ENCODE measurements at regions of chr11 and their contacts with region 1.

Region 1: DNA sequence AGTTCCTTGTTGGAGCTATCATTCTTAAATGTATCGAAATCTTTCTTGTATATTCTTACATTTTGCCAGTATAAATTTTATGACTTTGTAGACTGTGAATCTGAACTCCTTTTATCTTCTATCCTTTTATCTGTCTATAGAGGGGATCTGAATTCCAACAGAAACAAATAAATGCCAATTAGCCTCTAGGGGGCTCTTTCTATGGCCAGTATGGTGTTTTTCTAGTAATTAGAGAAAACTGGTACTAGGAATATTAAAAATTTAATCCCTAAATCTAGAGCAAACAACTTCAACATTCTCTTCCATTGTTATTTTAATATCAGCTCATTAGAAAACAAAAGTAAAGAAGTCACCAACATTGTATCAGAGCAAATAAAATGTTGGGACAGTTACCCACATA is 21.5 kb upstream of the CAT start:
- DNase-seq: no peak
- ATAC-seq: no peak
- H3K4me3 ChIP-seq: no peak overlapping the region
- H3K27ac ChIP-seq: no peak overlapping the region
- H3K4me1 ChIP-seq: peaks cover 36% of the 10 kb centered on the region
- H3K27me3 ChIP-seq: no peaks in the 10 kb centered on the region; a peak in 1 of 5 replicates
- CTCF ChIP-seq: no peak
- EP300 ChIP-seq: no peak
- POLR2A ChIP-seq: no peak
- RAD21 ChIP-seq: no peak

Region 2: GRCh38 chr11:34454308-34455032 is 37.3 kb after region 1 on chr11:
- CTCF ChIA-PET with region 1: no interaction called
- POLR2A ChIA-PET with region 1: no interaction called
- in situ Hi-C with region 1: no loop called
- intact Hi-C with region 1: no loop called
- DNase-seq: no peak
- ATAC-seq: no peak
- H3K4me3 ChIP-seq: no peak overlapping the region
- H3K27ac ChIP-seq: no peak overlapping the region
- H3K4me1 ChIP-seq: peaks cover 24% of the 10 kb centered on the region
- H3K27me3 ChIP-seq: no peaks in the 10 kb centered on the region
- CTCF ChIP-seq: no peak
- EP300 ChIP-seq: no peak
- POLR2A ChIP-seq: no peak
- RAD21 ChIP-seq: no peak

Region 3: DNA sequence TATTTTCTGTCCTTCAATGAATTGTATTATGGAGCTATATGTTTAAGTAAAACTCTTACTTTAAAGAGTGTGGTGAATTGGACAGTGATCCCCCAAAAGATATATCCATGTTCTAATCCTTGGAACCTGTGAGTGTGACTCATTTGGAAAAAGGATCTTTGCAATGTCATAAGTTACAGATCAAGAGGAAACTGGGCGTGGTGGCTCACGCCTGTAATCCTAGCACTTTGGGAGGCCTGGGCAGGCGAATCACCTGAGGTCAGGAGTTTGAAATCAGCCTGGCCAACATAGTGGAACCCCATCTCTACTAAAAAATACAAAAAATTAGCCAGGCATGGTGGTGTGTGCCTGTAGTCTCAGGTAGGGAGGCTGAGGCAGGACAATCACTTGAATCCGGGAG is 59.7 kb after region 1 on chr11:
- CTCF ChIA-PET with region 1: no interaction called
- POLR2A ChIA-PET with region 1: no interaction called
- in situ Hi-C with region 1: loop called (anchors 10 kb)
- intact Hi-C with region 1: no loop called
- DNase-seq: no peak
- ATAC-seq: no peak
- H3K4me3 ChIP-seq: no peak overlapping the region
- H3K27ac ChIP-seq: no peak overlapping the region
- H3K4me1 ChIP-seq: peaks cover 26% of the 10 kb centered on the region
- H3K27me3 ChIP-seq: no peaks in the 10 kb centered on the region
- CTCF ChIP-seq: no peak
- EP300 ChIP-seq: no peak
- POLR2A ChIP-seq: no peak
- RAD21 ChIP-seq: no peak

Region 4: GRCh38 chr11:35066783-35067423 is 649.7 kb after region 1 on chr11:
- CTCF ChIA-PET with region 1: no interaction called
- POLR2A ChIA-PET with region 1: no interaction called
- in situ Hi-C with region 1: no loop called
- intact Hi-C with region 1: no loop called
- DNase-seq: no peak
- ATAC-seq: no peak
- H3K4me3 ChIP-seq: no peak overlapping the region
- H3K27ac ChIP-seq: no peak overlapping the region
- H3K4me1 ChIP-seq: no peaks in the 10 kb centered on the region
- H3K27me3 ChIP-seq: peaks cover 0 to 12% of the 10 kb centered on the region in 2 experiments; a peak in 2 of 5 replicates
- CTCF ChIP-seq: no peak
- EP300 ChIP-seq: no peak
- POLR2A ChIP-seq: no peak
- RAD21 ChIP-seq: no peak